Left cardiac atrium (tissue), 4 donors: ENCODE measurements at regions of chr12 and their contacts with region 1.

Region 1: DNA sequence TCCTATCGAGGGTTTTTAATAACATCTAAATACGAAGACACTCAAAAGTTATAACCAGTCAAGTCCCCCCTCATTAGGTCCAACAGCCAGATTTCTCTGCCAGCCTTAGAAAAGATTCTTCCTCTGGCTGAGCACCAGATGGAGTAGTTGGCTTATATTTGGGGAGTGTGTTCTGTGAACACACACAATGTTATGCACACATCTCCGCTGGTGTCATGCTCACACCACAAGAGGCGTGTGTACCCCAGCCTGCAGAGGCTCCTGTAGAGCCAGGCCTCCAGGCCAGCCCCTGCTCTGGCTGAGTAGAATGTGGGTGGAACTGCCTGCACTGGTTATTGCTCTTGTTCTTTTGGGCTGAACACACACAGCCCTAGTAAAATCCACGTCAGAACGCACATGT is 64.0 kb downstream of the PIWIL1 start:
- DNase-seq: no peak
- ATAC-seq: peak; percentile 16 to 67

Region 2: DNA sequence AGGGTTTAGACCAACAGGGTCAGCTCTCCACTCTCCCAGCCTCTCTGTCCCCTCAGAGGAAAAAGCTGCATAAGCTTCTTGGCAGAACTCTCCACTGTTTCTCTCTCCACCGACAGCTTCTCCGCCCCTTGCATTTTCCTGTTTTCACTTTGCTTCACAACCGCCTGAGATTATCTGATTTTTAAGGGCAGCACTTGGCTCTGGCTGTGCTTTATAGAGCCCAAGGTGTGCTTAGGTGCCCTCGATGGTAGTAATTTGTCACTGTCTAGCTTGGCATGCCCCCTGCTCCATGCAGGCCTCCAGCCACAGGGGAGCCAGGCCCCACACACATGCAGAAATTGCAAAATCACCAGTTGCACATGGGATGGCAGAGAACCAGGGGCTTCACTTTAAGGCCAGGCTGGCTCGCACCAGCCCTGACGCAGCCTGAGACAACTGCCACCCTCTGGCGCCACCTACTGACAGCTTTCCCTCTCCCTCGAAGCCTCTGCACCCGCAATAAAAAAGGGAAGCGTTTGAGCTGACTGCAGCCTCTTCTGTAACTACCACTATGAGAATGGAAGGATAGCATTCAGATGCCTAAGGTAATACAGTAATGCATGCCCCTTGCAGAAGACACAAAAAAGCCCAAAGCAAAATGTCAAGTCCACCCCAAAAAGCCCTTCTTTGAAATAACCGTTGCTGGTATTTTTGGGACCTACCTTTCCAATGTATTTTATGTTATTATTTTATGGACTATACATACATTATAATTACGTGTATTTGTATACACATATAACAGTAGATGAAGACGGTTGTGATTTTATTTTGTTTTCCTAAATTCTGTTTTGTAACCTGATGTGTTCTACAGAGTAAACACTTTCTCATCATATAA is 346.4 kb after region 1 on chr12:
- intact Hi-C with region 1: loop called (anchors 1 to 5 kb)
- DNase-seq: peak; percentile 85
- ATAC-seq: peak; percentile 95 to 98